CD4-positive, alpha-beta memory T cell (primary cell): ENCODE measurements at regions of chr1 and their contacts with region 1.

Region 1: DNA sequence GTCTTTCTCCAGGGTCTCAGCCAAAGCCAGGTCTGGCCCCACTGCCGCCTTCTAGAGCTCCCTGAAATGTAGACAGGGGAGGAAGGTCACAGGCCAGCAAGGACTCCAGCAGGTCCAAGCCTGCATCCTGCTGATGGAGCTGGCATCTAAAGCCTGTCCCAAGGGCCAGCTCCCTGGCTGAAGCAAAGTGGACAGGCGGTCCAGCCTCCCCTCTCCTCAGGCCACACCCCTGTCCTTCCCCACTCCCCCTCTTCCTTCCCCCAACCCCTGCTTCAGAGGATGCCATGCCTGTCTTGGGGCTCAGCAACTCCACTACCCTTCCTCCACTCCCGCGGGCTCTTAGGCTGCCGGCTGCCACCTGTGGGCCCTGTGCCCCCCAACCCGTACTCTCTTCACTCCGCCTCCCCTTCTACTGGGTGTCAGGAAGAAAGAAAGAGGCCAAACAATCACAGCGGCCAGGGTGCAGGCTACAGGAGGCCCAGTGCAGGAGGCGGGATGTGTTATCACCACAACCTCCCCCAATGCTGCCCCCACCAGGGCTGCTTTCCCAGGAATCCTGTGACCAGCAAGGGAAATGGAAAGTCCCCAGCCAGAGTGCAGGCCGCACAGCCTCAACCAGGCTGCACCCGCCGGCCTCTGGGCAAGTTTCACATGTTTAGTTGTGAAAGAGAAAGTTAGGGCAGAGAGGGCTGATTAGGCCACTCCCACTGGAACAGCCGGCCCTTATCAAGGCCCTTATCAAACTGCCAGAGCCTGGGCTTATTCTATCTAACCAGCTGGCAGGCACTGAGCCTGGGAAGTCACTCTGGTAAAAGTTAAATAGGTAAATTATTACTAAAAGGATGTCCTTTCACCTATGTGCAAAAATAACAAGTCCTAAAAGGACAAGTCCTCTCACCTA is 34.1 kb downstream of the ACOT7 start:
- DNase-seq: peak; percentile 50 to 74 (median 62)
- H3K4me3 ChIP-seq: peak overlapping the region; percentile 24 to 38
- H3K4me3 Mint-ChIP-seq: peak overlapping the region; percentile 71 to 90 (median 77)
- H3K27ac ChIP-seq: peak overlapping the region; percentile 76
- H3K27ac Mint-ChIP-seq: peak overlapping the region; percentile 94 to 97 (median 96)
- H3K4me1 ChIP-seq: peaks cover 54% of the 10 kb centered on the region
- H3K4me1 Mint-ChIP-seq: peaks cover 29 to 65% (median 47%) of the 10 kb centered on the region in 4 donors
- H3K27me3 ChIP-seq: no peaks in the 10 kb centered on the region
- H3K27me3 Mint-ChIP-seq: no peaks in the 10 kb centered on the region

Region 2: DNA sequence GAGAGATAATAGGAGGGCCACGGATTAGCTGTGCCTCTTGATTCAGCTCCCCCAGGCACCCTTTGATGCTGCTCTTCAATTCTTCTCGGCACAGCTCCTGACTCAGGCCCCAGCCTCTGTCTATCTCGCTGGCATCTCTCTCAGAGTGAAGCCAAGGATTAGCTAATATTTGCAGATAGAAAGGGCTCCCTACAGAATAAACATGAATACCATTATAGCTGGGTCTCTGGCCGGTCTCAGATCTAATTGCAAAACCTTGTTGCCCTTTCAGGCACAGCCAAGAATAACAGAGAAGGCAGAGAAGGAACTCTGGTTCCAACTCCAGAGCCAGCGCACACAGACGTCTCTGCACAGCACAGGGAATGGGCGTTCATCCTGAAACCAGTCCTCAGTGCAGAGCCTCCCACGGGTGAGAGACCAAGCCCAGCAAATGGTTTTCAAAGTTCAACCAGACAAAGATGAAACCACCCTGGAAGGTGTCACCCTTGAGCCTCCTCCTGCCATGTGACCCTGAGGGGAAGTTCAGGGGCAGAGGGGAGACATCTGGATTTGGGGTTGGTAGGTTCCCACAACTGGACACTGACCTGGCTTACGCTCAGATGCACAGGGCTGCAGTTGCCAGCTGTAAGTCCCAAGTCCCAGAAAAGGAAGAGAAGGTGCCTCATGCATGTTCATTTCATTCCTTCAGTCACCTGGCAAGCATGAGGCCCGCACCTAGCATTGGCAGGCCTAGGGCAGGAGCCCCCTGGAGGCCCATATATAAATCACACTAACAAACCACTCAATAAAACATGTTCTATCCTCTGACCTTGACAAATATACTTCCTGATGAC is 761.3 kb before region 1 on chr1:
- CTCF ChIA-PET with region 1: no interaction called
- POLR2A ChIA-PET with region 1: no interaction called
- intact Hi-C with region 1: no loop called
- DNase-seq: no peak
- H3K4me3 ChIP-seq: no peak overlapping the region
- H3K4me3 Mint-ChIP-seq: no peak overlapping the region
- H3K27ac ChIP-seq: no peak overlapping the region
- H3K27ac Mint-ChIP-seq: no peak overlapping the region
- H3K4me1 ChIP-seq: no peaks in the 10 kb centered on the region
- H3K4me1 Mint-ChIP-seq: no peaks in the 10 kb centered on the region
- H3K27me3 ChIP-seq: no peaks in the 10 kb centered on the region
- H3K27me3 Mint-ChIP-seq: peaks cover 4 to 17% of the 10 kb centered on the region in 2 donors

Region 3: DNA sequence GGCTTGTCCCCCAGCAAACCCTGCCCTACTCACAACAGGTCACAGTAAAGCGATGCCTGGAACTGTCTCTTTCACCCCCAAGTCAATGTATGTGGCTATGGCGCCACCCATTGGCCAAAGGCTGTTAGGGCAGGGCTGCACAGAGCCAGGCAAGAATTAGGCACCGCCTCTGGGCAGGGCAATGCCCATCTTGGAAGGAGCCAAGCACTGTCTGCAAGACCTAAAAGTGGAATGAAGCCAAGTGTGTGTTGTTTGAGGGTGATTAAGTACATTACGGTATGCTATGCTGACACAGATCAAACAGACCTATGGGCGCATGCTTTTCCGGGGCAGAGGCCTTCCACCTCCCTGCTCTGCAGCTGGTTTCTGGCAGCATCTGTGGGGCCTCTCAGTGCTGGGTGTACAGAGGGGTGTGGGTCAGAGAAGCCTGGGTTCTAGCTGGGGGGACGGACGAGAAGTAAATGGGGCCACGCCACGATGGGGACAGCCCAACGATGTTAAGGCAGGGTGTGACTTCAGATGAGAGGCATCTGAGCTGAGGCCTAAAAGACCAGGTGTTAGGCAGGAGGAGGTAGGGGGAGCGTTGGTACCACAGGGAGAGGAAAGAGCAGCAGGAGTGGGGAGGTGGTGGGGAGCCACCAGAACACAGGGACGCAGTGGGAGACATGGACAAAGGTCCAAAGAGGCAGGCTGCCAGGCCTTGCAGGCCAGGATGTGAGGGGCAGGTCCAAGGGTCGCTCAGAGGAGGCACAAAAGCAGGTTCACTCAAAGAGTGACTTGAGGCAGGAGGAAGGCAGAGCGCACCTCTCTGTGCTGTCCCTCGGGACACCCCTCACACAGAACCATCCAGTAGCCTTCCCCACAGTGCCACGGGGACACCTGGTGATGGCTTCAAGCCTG is 15.7 kb before region 1 on chr1:
- CTCF ChIA-PET with region 1: interaction called, 61 read pairs
- POLR2A ChIA-PET with region 1: interaction called, 64 read pairs
- intact Hi-C with region 1: loop called (anchors 1 kb)
- DNase-seq: peak; percentile 50 to 56 (median 51)
- H3K4me3 ChIP-seq: no peak overlapping the region
- H3K4me3 Mint-ChIP-seq: peak overlapping the region in 1 of 8 donors; percentile 37
- H3K27ac ChIP-seq: no peak overlapping the region
- H3K27ac Mint-ChIP-seq: peak overlapping the region in 2 of 7 donors; percentile 29 to 84
- H3K4me1 ChIP-seq: peaks cover 13% of the 10 kb centered on the region
- H3K4me1 Mint-ChIP-seq: peaks cover 8 to 20% (median 11%) of the 10 kb centered on the region in 4 donors
- H3K27me3 ChIP-seq: no peaks in the 10 kb centered on the region
- H3K27me3 Mint-ChIP-seq: no peaks in the 10 kb centered on the region

Region 4: DNA sequence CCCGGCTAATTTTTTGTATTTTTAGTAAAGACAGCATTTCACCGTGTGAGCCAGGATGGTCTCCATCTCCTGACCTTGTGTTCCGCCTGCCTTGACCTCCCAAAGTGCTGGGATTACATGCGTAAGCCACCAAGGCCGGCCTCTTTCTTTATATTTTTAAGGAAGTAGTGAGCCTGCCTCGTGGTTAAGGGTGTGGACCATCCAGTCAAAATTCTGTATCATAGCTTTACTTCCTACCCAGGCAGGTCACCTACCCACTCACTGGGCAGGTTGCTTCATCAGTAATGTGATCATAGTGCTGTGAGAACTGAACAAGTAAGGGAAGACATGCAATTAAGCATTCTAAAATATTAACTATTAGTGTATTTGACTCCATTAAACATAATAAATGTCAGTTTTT is 42.2 kb after region 1 on chr1:
- CTCF ChIA-PET with region 1: interaction called, 71 read pairs
- POLR2A ChIA-PET with region 1: interaction called, 5 read pairs
- intact Hi-C with region 1: loop called (anchors 1 kb)
- DNase-seq: no peak
- H3K4me3 ChIP-seq: no peak overlapping the region
- H3K4me3 Mint-ChIP-seq: no peak overlapping the region
- H3K27ac ChIP-seq: no peak overlapping the region
- H3K27ac Mint-ChIP-seq: no peak overlapping the region
- H3K4me1 ChIP-seq: no peaks in the 10 kb centered on the region
- H3K4me1 Mint-ChIP-seq: peaks cover 0 to 5% (median 4%) of the 10 kb centered on the region in 4 donors
- H3K27me3 ChIP-seq: no peaks in the 10 kb centered on the region
- H3K27me3 Mint-ChIP-seq: peaks cover 2 to 4% of the 10 kb centered on the region in 2 donors